T-cell (primary cell): ENCODE measurements at regions of chr20 and their contacts with region 1.

Region 1: GRCh38 chr20:53736757-53737395 is 143.2 kb upstream of the ZNF217 start:
- DNase-seq: peak in 2 of 35 experiments; percentile 17 to 47
- ATAC-seq: peak in 2 of 4 experiments; percentile 38 to 66
- H3K4me3 ChIP-seq: no peak overlapping the region
- H3K4me3 Mint-ChIP-seq: peak overlapping the region; percentile 23 to 63 (median 52)
- H3K27ac ChIP-seq: no peak overlapping the region
- H3K27ac Mint-ChIP-seq: peak overlapping the region; percentile 85 to 90
- H3K4me1 ChIP-seq: peaks cover 6 to 26% of the 10 kb centered on the region in 2 experiments
- H3K4me1 Mint-ChIP-seq: peaks cover 48 to 50% (median 49%) of the 10 kb centered on the region in 3 donors
- H3K27me3 ChIP-seq: no peaks in the 10 kb centered on the region
- H3K27me3 Mint-ChIP-seq: no peaks in the 10 kb centered on the region

Region 2: GRCh38 chr20:53773792-53774401 is 37.0 kb after region 1 on chr20:
- CTCF ChIA-PET with region 1: interaction called in 1 of 2 experiments, 10 read pairs
- POLR2A ChIA-PET with region 1: no interaction called
- DNase-seq: no peak
- ATAC-seq: no peak
- H3K4me3 ChIP-seq: no peak overlapping the region
- H3K4me3 Mint-ChIP-seq: no peak overlapping the region
- H3K27ac ChIP-seq: no peak overlapping the region
- H3K27ac Mint-ChIP-seq: no peak overlapping the region
- H3K4me1 ChIP-seq: no peaks in the 10 kb centered on the region
- H3K4me1 Mint-ChIP-seq: no peaks in the 10 kb centered on the region
- H3K27me3 ChIP-seq: no peaks in the 10 kb centered on the region
- H3K27me3 Mint-ChIP-seq: no peaks in the 10 kb centered on the region